AG04449 (cell line): ENCODE measurements at regions of chr22 and their contacts with region 1.

Region 1: GRCh38 chr22:24099666-24100065 is 81.6 kb upstream of the SUSD2 start:
- DNase-seq: no peak
- H3K4me3 ChIP-seq: no peak overlapping the region
- CTCF ChIP-seq: no peak

Region 2: GRCh38 chr22:23904573-23905260 is 194.9 kb before region 1 on chr22:
- CTCF ChIA-PET with region 1: no interaction called
- POLR2A ChIA-PET with region 1: no interaction called
- DNase-seq: no peak
- H3K4me3 ChIP-seq: no peak overlapping the region
- CTCF ChIP-seq: no peak

Region 3: DNA sequence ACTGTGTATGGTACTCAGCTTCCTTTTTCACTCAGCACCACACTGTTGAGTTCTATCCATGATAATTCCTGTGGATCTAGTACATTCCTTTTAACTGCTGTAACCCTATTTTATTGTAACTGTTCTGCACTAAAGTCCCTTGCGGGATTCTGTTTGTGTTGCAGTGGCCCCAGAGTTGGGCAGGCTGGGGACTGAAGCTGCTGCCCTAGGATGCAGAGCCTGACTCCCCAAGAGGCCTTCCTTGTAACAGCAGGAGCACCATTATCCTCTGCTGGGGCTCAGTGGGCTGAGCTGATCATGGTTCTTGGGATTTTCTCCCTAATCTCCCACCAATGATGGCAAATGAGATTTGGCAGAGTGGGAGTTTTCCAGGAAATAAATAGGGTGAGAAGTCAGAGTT is 10.8 kb before region 1 on chr22:
- CTCF ChIA-PET with region 1: interaction called, 16 read pairs
- POLR2A ChIA-PET with region 1: interaction called, 3 read pairs
- DNase-seq: no peak
- H3K4me3 ChIP-seq: no peak overlapping the region
- CTCF ChIP-seq: no peak

Region 4: DNA sequence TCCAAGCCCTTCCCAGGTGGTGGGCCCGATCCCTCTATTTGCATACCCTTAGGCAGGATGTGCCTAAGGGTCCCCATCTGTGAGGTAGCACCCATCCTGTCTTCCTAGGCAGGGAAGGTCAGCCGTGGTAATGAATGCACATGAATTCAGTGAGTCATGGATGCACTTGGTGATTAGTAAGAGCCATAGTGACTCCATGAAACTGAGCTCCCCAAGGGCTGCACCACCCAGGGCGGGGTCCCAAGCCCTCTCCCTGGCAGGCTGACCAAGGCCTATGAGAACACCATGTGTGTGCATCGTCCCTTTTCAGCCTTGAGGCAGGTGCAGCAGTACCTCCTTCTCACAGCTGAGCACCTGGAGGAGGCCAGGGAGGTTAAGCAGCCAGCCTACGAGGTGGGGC is 66.0 kb after region 1 on chr22:
- CTCF ChIA-PET with region 1: no interaction called
- POLR2A ChIA-PET with region 1: no interaction called
- DNase-seq: no peak
- H3K4me3 ChIP-seq: no peak overlapping the region
- CTCF ChIP-seq: no peak